Dorsolateral prefrontal cortex (tissue), 120 donors: ENCODE measurements at regions of chr1 and their contacts with region 1.

Region 1: GRCh38 chr1:211578640-211579433 is at the start of gene SLC30A1:
- DNase-seq: peak; percentile 99 to 100 (median 100)
- H3K4me3 ChIP-seq: peak within 1 kb of the TSS; percentile 59 to 99 (median 92)
- H3K27ac ChIP-seq: peak within 1 kb of the TSS; percentile 6 to 98 (median 92)
- H3K27me3 ChIP-seq: no peaks in the 10 kb centered on the region
- CTCF ChIP-seq: peak in 7 of 56 donors; percentile 2 to 33 (median 10)
- total RNA-seq, gene SLC30A1: 9.5 to 52.2 (median 22.1) TPM

Region 2: GRCh38 chr1:211382714-211383480 is 195.9 kb before region 1 on chr1:
- intact Hi-C with region 1: loop called in 1 of 2 experiments (anchors 5 kb)
- DNase-seq: peak; percentile 76 to 96 (median 92)
- H3K4me3 ChIP-seq: peak overlapping the region; percentile 62 to 93 (median 80)
- H3K27ac ChIP-seq: peak overlapping the region; percentile 46 to 96 (median 89)
- H3K27me3 ChIP-seq: no peaks in the 10 kb centered on the region
- CTCF ChIP-seq: peak in 22 of 56 donors; percentile 3 to 55 (median 24)

Region 3: DNA sequence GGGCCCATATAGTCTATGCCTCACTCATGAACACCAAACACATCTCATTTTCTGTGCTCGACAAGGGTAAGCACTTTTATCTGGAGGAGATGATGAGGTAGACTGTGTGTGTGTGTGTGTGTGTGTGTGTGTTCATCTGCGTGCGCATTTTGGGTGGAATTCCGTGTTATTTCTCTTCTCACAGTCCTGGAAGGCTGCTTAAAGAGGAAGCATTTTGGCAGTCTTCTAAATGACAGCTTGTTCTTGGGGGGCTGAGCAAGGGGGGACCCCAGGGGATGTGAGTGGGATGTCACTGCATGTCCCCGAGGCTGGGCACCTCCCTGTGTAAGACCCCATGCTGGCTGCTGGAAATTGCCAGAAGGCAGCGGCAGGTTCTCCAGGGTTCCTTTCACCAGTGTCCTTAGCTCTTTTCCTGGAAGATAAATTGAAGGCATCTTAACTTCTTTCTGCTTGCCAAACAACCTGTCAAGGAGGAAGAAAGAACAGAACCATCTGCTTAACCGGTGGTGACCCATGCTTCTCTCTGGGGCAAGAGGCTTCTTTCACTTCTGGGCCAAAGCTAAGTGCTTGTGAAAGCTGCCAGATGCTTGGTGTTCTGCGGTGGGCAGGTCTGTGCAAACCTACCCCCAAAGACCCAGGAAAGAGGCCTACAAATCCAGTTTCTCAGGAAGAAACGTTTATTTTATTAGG is 77.0 kb before region 1 on chr1:
- intact Hi-C with region 1: no loop called
- DNase-seq: no peak
- H3K4me3 ChIP-seq: no peak overlapping the region
- H3K27ac ChIP-seq: no peak overlapping the region
- H3K27me3 ChIP-seq: peaks cover 0 to 7% (median 0%) of the 10 kb centered on the region in 45 donors
- CTCF ChIP-seq: no peak

Region 4: GRCh38 chr1:211514030-211514754 is 64.6 kb before region 1 on chr1:
- intact Hi-C with region 1: loop called in 1 of 2 experiments (anchors 2 kb)
- DNase-seq: peak; percentile 54 to 84 (median 76)
- H3K4me3 ChIP-seq: peak overlapping the region in 24 of 59 donors; percentile 18 to 51 (median 34)
- H3K27ac ChIP-seq: peak overlapping the region in 6 of 59 donors; percentile 3 to 63 (median 17)
- H3K27me3 ChIP-seq: no peaks in the 10 kb centered on the region
- CTCF ChIP-seq: peak; percentile 31 to 91 (median 76)

Region 5: DNA sequence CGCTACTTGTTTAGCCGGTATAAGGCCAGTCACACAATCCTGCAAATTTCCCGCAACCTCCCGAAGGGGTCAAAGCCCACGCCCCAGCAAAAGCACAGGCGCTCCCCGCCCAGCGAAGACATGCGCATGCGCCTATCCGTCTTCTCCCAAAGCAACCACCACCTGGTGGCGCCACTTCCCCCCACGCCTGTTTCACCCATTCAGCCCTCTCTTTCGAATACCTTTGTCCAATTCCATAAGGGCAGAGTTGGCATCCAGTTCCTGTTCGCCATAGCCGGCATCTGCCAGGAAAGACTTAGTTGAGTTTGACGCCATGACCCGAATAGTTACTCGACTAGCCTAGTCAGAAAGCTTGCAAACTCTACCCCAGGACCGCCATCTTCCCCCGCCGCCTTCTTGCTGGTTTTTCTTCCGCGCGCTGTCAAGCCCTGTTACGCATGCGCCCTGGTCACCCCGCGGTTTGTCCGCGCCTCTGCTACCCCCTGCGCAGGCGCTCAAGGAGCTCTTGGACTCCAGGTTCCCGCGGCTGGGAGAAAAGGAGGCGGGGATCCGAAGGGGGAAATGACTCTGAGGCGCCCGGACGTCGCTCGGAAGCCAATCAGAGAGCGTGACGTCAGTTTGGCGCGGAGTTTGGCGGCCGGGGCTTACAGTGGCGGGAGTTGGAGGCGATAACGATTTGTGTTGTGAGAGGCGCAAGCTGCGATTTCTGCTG is 456.4 kb after region 1 on chr1 and contains the starts of genes DTL and INTS7:
- intact Hi-C with region 1: loop called in 1 of 2 experiments (anchors 10 kb)
- DNase-seq: peak; percentile 94 to 98 (median 97)
- H3K4me3 ChIP-seq: peak within 1 kb of the TSS; percentile 41 to 91 (median 71)
- H3K27ac ChIP-seq: peak within 1 kb of the TSS; percentile 74 to 99 (median 95)
- H3K27me3 ChIP-seq: peaks cover 0 to 8% (median 0%) of the 10 kb centered on the region in 45 donors
- CTCF ChIP-seq: peak; percentile 75 to 99 (median 92)
- total RNA-seq, gene DTL: 0.11 to 3.4 (median 0.62) TPM in 96 of 120 experiments, not detected in the others
- total RNA-seq, gene INTS7: 9.6 to 23.7 (median 16.5) TPM